SK-N-SH (cell line): ENCODE measurements at regions of chr22 and their contacts with region 1.

Region 1: GRCh38 chr22:26461188-26461810 is 22.3 kb downstream of the HPS4 start:
- DNase-seq: peak; percentile 84
- H3K4me3 ChIP-seq: no peak overlapping the region; a peak in 1 of 4 replicates
- H3K27ac ChIP-seq: no peak overlapping the region
- H3K4me1 ChIP-seq: peaks cover 0 to 2% of the 10 kb centered on the region in 2 experiments; a peak in 2 of 4 replicates
- H3K27me3 ChIP-seq: no peaks in the 10 kb centered on the region
- CTCF ChIP-seq: peak; percentile 93
- EP300 ChIP-seq: no peak
- RAD21 ChIP-seq: peak; percentile 80

Region 2: DNA sequence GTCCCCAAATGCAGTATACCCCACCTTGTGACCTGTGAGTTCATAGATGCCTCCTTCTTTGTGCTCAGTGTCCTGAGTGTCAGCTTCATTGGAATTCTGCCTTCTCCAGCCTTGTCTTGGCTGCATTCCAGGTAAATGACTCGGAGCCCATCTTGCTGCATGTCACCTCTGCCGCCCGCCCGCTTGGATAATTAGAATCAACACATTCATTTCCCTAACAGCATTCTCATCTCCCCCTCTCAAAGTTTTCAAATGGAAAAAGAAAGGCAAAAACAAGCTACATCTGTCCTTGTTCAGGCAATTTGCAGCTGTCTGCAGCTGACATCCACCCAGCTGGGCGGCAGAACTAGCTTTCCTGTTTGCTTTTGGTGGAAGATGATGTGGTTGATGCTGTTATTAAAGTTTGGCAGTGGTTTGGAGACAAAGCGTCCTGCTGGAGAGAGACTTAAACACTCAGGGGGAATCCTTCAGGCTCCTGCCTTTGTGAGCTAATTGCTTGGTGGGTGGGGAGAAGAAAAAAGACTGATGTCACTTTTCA is 490.9 kb before region 1 on chr22:
- CTCF ChIA-PET with region 1: no interaction called
- POLR2A ChIA-PET with region 1: no interaction called
- DNase-seq: no peak
- H3K4me3 ChIP-seq: no peak overlapping the region
- H3K27ac ChIP-seq: no peak overlapping the region
- H3K4me1 ChIP-seq: peaks cover 0 to 8% of the 10 kb centered on the region in 2 experiments; a peak in 1 of 4 replicates
- H3K27me3 ChIP-seq: no peaks in the 10 kb centered on the region
- CTCF ChIP-seq: no peak
- EP300 ChIP-seq: no peak
- RAD21 ChIP-seq: no peak

Region 3: DNA sequence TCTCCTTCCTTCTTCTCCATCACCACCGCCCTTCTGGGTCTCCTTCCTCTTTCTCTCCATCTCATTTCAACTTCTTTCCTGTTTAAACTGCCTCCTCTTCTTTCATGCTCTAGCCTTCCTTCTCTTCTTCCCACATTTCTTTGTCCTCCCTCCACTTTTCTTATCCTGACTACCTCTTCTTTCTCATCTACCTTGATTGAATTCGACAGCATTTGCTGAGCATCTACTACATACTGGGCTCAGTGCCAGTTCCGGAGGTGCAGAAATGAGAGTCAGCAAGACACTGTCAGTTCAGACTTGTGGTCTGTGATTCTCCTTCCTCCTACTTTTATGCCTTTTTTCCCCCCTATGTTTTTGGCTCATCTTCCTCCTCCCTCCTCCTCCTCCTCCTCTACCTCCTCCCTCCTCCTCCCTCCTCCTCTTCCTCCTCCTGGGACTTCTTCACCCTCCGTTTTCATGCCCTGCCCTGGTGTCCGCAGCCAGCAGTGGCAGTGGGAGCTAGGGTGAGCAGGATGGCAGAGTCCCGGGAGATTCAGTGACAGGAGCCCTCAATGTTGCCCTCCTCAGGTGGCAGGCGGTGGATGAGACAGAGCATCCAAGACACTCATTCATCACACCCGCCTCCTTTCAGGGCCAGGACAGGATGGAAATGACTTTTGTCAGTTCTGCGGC is 438.1 kb before region 1 on chr22:
- CTCF ChIA-PET with region 1: no interaction called
- POLR2A ChIA-PET with region 1: no interaction called
- DNase-seq: no peak
- H3K4me3 ChIP-seq: no peak overlapping the region
- H3K27ac ChIP-seq: no peak overlapping the region
- H3K4me1 ChIP-seq: peaks cover 0 to 3% of the 10 kb centered on the region in 2 experiments; a peak in 1 of 4 replicates
- H3K27me3 ChIP-seq: no peaks in the 10 kb centered on the region
- CTCF ChIP-seq: no peak
- EP300 ChIP-seq: no peak
- RAD21 ChIP-seq: no peak

Region 4: GRCh38 chr22:26364066-26365015 is 97.0 kb before region 1 on chr22:
- CTCF ChIA-PET with region 1: interaction called, 99 read pairs
- POLR2A ChIA-PET with region 1: interaction called, 3 read pairs
- DNase-seq: peak; percentile 73
- H3K4me3 ChIP-seq: no peak overlapping the region
- H3K27ac ChIP-seq: no peak overlapping the region
- H3K4me1 ChIP-seq: peaks cover 0 to 7% of the 10 kb centered on the region in 2 experiments; a peak in 2 of 4 replicates
- H3K27me3 ChIP-seq: no peaks in the 10 kb centered on the region
- CTCF ChIP-seq: peak; percentile 75
- EP300 ChIP-seq: peak in 1 of 2 experiments; percentile 20; a peak in 1 of 4 replicates
- RAD21 ChIP-seq: peak; percentile 87

Region 5: GRCh38 chr22:26391623-26392022 is 69.7 kb before region 1 on chr22:
- CTCF ChIA-PET with region 1: interaction called, 83 read pairs
- POLR2A ChIA-PET with region 1: no interaction called
- DNase-seq: no peak
- H3K4me3 ChIP-seq: no peak overlapping the region
- H3K27ac ChIP-seq: no peak overlapping the region
- H3K4me1 ChIP-seq: no peaks in the 10 kb centered on the region
- H3K27me3 ChIP-seq: no peaks in the 10 kb centered on the region
- CTCF ChIP-seq: no peak
- EP300 ChIP-seq: no peak
- RAD21 ChIP-seq: no peak

Region 6: DNA sequence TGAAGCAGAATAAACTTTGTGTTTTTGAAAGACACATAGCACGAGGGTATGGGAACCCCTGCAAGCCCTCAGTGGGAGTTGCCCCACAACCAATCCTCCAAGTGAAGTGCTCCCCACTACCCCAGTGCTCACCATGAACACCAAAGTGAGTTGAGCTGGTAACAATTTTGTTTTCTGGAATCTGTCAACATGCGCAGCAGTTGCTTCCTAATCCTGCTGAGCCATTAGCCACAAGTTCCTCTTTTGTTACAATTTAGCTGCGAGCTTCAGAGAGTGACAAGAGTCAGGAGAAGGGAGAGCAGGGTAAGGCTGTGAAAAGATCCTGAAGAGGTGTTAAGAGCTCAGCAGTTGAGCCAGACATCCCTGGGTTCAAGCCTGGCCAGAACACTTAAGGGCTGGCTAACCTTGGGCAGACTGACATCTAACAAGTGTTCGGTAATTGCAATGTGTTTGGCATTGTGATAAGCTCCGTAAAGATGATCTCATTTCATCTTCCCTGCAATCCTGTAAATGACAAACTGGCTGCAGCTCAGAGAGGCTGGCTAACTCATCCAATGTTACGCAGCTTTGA is 56.4 kb before region 1 on chr22:
- CTCF ChIA-PET with region 1: interaction called, 62 read pairs
- POLR2A ChIA-PET with region 1: no interaction called
- DNase-seq: no peak
- H3K4me3 ChIP-seq: no peak overlapping the region
- H3K27ac ChIP-seq: no peak overlapping the region
- H3K4me1 ChIP-seq: peaks cover 0 to 7% of the 10 kb centered on the region in 2 experiments; a peak in 1 of 4 replicates
- H3K27me3 ChIP-seq: no peaks in the 10 kb centered on the region; the same call in 1 of the 2 replicates
- CTCF ChIP-seq: no peak
- EP300 ChIP-seq: no peak
- RAD21 ChIP-seq: no peak

Region 7: DNA sequence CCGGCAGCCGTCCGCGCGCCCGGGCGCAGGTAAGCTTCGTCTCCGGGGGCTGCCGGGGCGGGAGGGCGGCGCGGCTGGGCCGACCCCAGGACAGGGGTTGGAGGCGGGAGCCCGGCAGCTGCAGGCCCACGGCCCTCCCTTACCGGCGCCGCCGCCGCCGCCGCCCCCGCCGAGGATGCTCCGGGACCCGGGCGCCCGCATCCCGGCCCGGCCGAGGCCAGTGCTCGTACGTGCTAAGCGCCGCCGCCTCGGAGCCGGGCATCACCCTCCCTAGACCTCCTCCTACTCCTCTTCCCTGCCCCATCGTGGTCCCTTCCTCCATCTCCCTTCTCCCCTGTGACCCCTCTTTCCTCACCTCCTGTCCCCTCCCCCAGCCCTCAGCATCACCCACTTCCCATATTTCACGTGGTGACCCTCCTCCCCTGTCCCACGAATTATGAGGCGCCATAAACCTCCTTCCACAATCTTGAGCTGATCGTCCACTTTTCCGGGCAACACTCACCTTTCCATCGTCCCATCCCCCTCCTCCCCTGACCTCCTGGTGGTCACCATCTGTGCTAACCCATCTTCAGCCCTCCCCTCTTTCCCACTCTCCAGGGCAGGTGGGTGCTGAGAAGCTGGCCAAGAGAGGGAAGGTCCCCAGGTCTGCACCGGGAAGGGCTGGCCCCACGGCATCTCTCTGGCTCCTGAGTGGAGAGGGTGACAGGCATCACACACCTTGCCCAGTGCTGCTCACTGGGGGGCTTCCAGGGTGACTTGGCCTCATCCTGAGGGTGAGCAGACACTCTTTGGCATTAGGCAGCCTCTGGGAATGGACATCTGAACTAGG is 31.6 kb before region 1 on chr22:
- CTCF ChIA-PET with region 1: interaction called, 14 read pairs
- POLR2A ChIA-PET with region 1: no interaction called
- DNase-seq: peak; percentile 76
- H3K4me3 ChIP-seq: peak overlapping the region; percentile 58 to 60
- H3K27ac ChIP-seq: no peak overlapping the region
- H3K4me1 ChIP-seq: peaks cover 0 to 13% of the 10 kb centered on the region in 2 experiments; a peak in 1 of 4 replicates
- H3K27me3 ChIP-seq: no peaks in the 10 kb centered on the region; the same call in 1 of the 2 replicates
- CTCF ChIP-seq: no peak
- EP300 ChIP-seq: no peak
- RAD21 ChIP-seq: no peak

Region 8: GRCh38 chr22:26445577-26446275 is 15.6 kb before region 1 on chr22:
- CTCF ChIA-PET with region 1: interaction called, 20 read pairs
- POLR2A ChIA-PET with region 1: no interaction called
- DNase-seq: no peak
- H3K4me3 ChIP-seq: no peak overlapping the region
- H3K27ac ChIP-seq: no peak overlapping the region
- H3K4me1 ChIP-seq: no peaks in the 10 kb centered on the region; a peak in 1 of 4 replicates
- H3K27me3 ChIP-seq: no peaks in the 10 kb centered on the region
- CTCF ChIP-seq: no peak
- EP300 ChIP-seq: no peak
- RAD21 ChIP-seq: no peak

Region 9: DNA sequence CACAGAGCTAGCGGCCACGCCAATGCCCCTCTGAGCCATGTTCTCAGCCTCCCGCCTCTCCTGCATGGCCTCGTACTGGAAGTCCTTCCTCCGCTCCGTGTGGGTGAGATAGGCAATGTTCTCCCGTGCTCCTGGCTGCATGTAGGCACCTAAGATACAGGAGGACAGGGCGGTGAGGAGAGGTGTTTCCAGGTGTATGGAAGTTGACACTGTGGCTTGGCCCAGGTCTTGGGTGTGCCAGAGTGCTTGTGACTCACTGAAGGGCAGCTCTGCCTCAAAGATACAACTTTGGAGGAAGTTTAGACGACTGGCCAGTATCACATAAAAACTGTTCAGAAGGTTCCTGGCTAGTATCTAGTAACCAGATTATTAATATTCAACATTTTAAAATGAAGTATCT is 30.9 kb after region 1 on chr22:
- CTCF ChIA-PET with region 1: interaction called, 12 read pairs
- POLR2A ChIA-PET with region 1: no interaction called
- DNase-seq: no peak
- H3K4me3 ChIP-seq: no peak overlapping the region
- H3K27ac ChIP-seq: no peak overlapping the region
- H3K4me1 ChIP-seq: no peaks in the 10 kb centered on the region
- H3K27me3 ChIP-seq: no peaks in the 10 kb centered on the region
- CTCF ChIP-seq: no peak
- EP300 ChIP-seq: no peak
- RAD21 ChIP-seq: no peak

Region 10: GRCh38 chr22:26542831-26543230 is 81.5 kb after region 1 on chr22:
- CTCF ChIA-PET with region 1: no interaction called
- POLR2A ChIA-PET with region 1: no interaction called
- DNase-seq: no peak
- H3K4me3 ChIP-seq: no peak overlapping the region
- H3K27ac ChIP-seq: no peak overlapping the region
- H3K4me1 ChIP-seq: no peaks in the 10 kb centered on the region; a peak in 1 of 4 replicates
- H3K27me3 ChIP-seq: no peaks in the 10 kb centered on the region
- CTCF ChIP-seq: no peak
- EP300 ChIP-seq: no peak
- RAD21 ChIP-seq: no peak

Region 11: GRCh38 chr22:26589845-26590736 is 128.8 kb after region 1 on chr22 and contains the start of gene TPST2:
- CTCF ChIA-PET with region 1: no interaction called
- POLR2A ChIA-PET with region 1: no interaction called
- DNase-seq: peak; percentile 98
- H3K4me3 ChIP-seq: peak within 1 kb of the TSS; percentile 74 to 88
- H3K27ac ChIP-seq: peak within 1 kb of the TSS; percentile 46 to 58; a peak in 3 of 4 replicates
- H3K4me1 ChIP-seq: peaks cover 5 to 12% of the 10 kb centered on the region in 2 experiments; a peak in 3 of 4 replicates
- H3K27me3 ChIP-seq: no peaks in the 10 kb centered on the region
- CTCF ChIP-seq: no peak
- EP300 ChIP-seq: no peak
- RAD21 ChIP-seq: no peak
- polyA plus RNA-seq, gene TPST2: 52.3 and 58.4 TPM in 2 replicates